PC-9 (cell line): ENCODE measurements at regions of chr4 and their contacts with region 1.

Region 1: GRCh38 chr4:74311696-74312313 is 3.5 kb downstream of the EPGN start:
- DNase-seq: peak in 1 of 2 experiments; percentile 45
- H3K4me3 ChIP-seq: no peak overlapping the region
- H3K27ac ChIP-seq: no peak overlapping the region
- H3K4me1 ChIP-seq: no peaks in the 10 kb centered on the region
- H3K27me3 ChIP-seq: no peaks in the 10 kb centered on the region
- CTCF ChIP-seq: peak; percentile 69

Region 2: GRCh38 chr4:74016068-74016467 is 295.7 kb before region 1 on chr4:
- CTCF ChIA-PET with region 1: no interaction called
- POLR2A ChIA-PET with region 1: no interaction called
- intact Hi-C with region 1: no loop called
- DNase-seq: no peak
- H3K4me3 ChIP-seq: no peak overlapping the region
- H3K27ac ChIP-seq: no peak overlapping the region
- H3K4me1 ChIP-seq: no peaks in the 10 kb centered on the region
- H3K27me3 ChIP-seq: no peaks in the 10 kb centered on the region
- CTCF ChIP-seq: no peak

Region 3: GRCh38 chr4:74189331-74190043 is 122.3 kb before region 1 on chr4:
- CTCF ChIA-PET with region 1: no interaction called
- POLR2A ChIA-PET with region 1: no interaction called
- intact Hi-C with region 1: loop called (anchors 1 kb)
- DNase-seq: peak in 1 of 2 experiments; percentile 53
- H3K4me3 ChIP-seq: no peak overlapping the region
- H3K27ac ChIP-seq: no peak overlapping the region
- H3K4me1 ChIP-seq: no peaks in the 10 kb centered on the region
- H3K27me3 ChIP-seq: no peaks in the 10 kb centered on the region
- CTCF ChIP-seq: peak; percentile 69

Region 4: DNA sequence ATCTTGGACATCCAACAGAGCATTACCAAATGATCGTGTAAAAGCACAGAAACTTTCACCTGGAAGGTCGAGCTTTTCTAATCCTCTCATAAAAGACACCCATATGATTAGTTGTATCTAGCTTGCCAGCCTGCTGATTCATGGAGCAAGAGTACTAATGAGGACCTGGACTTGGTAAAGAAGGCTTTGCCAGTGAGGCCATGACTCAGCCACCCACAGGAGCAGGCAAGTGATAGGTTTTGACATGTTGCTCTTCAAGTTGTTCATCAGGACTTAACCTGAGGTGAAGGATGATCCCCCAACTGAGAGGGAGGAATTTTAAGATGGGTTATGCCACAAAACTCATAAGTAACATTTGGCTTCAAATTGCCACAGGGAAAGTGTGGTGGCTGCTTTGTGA is 28.2 kb before region 1 on chr4:
- CTCF ChIA-PET with region 1: no interaction called
- POLR2A ChIA-PET with region 1: interaction called, 3 read pairs
- intact Hi-C with region 1: loop called (anchors 1 kb)
- DNase-seq: peak; percentile 53 to 84
- H3K4me3 ChIP-seq: peak overlapping the region; percentile 13; the same call in 1 of the 2 replicates
- H3K27ac ChIP-seq: peak overlapping the region; percentile 81
- H3K4me1 ChIP-seq: peaks cover 18% of the 10 kb centered on the region
- H3K27me3 ChIP-seq: no peaks in the 10 kb centered on the region
- CTCF ChIP-seq: no peak

Region 5: GRCh38 chr4:75338352-75338880 is 1026.6 kb after region 1 on chr4:
- CTCF ChIA-PET with region 1: no interaction called
- POLR2A ChIA-PET with region 1: no interaction called
- intact Hi-C with region 1: no loop called
- DNase-seq: no peak
- H3K4me3 ChIP-seq: no peak overlapping the region
- H3K27ac ChIP-seq: no peak overlapping the region
- H3K4me1 ChIP-seq: no peaks in the 10 kb centered on the region
- H3K27me3 ChIP-seq: no peaks in the 10 kb centered on the region; the same call in 1 of the 2 replicates
- CTCF ChIP-seq: no peak